ENCODE measurements at regions of chr16 and their contacts with region 1.

Region 1: DNA sequence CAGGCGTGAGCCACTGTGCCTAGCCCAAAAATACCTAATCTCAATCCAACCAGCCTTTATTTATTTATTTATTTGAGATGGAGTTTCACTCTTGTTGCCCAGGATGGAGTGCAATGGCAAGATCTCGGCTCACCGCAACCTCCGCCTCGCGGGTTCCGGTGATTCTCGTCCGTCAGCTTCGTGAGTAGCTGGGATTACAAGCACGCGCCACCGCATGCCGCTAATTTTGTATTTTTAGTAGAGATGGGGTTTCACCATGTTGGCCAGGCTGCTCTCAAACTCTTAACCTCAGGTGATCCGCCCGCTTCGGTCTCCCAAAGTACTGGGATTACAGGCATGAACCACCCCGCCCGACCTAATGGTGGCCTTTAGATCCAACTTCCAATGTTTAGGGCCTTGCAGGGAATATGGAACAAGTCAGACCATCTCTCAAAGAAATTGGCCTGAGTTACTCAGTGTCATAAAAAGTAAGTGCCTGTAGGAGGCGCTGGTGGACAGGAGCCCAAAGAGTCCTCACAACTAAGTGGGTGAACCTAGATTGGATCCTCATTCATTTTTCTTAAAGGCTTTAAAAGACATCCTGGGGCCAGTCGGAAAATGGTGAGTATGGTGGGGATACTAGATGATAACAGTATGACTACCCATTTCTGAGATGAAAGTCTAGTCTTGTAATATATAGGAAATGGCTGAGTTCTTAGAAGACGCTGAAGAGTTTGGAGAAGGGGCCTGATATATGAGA is 4.6 kb downstream of the ZSCAN10 start:
- DNase-seq: peak; percentile 64
- H3K4me3 Mint-ChIP-seq: no peak overlapping the region
- H3K27ac Mint-ChIP-seq: peak overlapping the region; percentile 11
- H3K4me1 Mint-ChIP-seq: peaks cover 62% of the 10 kb centered on the region
- H3K27me3 Mint-ChIP-seq: no peaks in the 10 kb centered on the region

Region 2: GRCh38 chr16:3080024-3080423 is 14.4 kb before region 1 on chr16:
- CTCF ChIA-PET with region 1: interaction called, 12 read pairs
- POLR2A ChIA-PET with region 1: interaction called, 3 read pairs
- DNase-seq: no peak
- H3K4me3 Mint-ChIP-seq: no peak overlapping the region
- H3K27ac Mint-ChIP-seq: no peak overlapping the region
- H3K4me1 Mint-ChIP-seq: peaks cover 80% of the 10 kb centered on the region
- H3K27me3 Mint-ChIP-seq: no peaks in the 10 kb centered on the region

Region 3: DNA sequence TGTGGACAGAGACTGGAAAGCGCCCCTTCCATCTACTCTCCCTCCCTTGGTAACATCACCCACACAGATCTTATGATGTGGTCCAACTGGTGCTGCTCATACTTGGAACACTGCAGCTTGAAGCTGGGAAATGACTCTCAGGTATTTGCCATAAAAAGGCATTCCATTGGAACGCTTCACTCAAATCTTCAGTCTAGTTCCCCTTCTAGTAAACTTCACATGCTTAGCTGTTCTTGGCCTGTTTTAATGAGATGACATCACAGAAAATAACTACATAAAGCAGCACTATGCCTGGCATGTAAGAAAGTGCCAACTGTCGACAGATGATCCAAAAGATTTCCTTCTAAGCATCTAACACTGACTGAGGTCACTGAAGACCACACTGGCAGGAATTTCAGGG is 198.1 kb after region 1 on chr16:
- CTCF ChIA-PET with region 1: no interaction called
- POLR2A ChIA-PET with region 1: no interaction called
- DNase-seq: no peak
- H3K4me3 Mint-ChIP-seq: no peak overlapping the region
- H3K27ac Mint-ChIP-seq: no peak overlapping the region
- H3K4me1 Mint-ChIP-seq: no peaks in the 10 kb centered on the region
- H3K27me3 Mint-ChIP-seq: no peaks in the 10 kb centered on the region

Region 4: DNA sequence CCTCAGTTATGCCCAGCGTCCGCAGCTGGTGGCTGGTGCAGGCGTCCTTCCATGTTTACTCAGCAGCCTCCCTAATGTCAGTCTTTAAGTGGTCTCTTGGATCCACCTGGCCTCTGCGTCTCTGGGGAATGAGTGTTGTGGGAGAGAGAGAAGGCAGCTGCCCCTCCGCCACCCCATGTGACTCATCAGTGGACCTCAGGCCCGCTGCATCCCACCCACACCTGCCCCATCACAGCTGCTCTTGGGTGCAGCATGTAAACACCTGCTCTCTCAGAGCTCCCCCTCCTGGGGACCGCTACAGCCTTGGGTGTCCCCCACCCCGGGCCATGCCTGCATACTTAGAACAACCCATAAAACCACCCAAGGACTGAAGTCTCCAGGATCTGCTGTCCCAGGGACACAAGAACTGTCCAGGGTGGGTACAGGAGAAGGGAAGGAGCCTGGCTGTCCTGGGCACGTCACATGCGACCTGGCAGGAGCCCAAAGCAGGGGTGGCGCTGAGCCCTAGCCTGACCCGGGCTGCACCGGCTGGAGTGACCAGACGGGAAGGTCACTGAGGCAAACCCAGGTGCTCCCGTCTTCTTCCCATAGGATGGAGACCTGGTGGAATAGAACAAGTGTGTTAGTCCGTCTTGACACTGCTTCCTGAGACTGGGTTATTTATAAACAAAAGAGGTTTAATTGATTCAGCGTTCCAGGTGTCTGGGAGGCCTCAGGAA is 396.6 kb after region 1 on chr16:
- CTCF ChIA-PET with region 1: no interaction called
- POLR2A ChIA-PET with region 1: no interaction called
- DNase-seq: no peak
- H3K4me3 Mint-ChIP-seq: no peak overlapping the region
- H3K27ac Mint-ChIP-seq: no peak overlapping the region
- H3K4me1 Mint-ChIP-seq: no peaks in the 10 kb centered on the region
- H3K27me3 Mint-ChIP-seq: no peaks in the 10 kb centered on the region